Heart left ventricle (tissue), 16 donors: ENCODE measurements at regions of chr4 and their contacts with region 1.

Region 1: DNA sequence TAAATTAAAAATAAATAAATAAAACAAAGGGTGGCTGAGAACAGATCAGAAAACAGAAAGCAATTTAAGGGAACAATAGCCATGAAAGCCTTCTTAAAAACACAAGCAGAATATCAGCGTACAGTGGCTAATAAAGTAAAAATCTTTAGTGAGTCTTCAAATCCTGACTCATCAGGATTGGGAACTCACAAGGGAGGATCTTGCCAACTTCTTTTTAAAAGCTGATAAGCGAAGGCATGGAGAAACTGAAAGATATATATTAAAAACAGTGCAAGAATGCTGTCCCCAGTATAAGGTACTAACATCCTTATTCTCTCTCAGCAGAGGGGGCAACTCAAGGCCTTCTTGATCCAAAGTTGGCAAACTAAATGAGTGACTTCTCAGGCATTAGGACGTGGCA is 180.1 kb downstream of the DHX15 start:
- DNase-seq: no peak
- ATAC-seq: no peak
- H3K4me3 ChIP-seq: no peak overlapping the region
- H3K27ac ChIP-seq: no peak overlapping the region
- H3K4me1 ChIP-seq: no peaks in the 10 kb centered on the region
- H3K27me3 ChIP-seq: no peaks in the 10 kb centered on the region
- CTCF ChIP-seq: no peak
- POLR2A ChIP-seq: no peak

Region 2: DNA sequence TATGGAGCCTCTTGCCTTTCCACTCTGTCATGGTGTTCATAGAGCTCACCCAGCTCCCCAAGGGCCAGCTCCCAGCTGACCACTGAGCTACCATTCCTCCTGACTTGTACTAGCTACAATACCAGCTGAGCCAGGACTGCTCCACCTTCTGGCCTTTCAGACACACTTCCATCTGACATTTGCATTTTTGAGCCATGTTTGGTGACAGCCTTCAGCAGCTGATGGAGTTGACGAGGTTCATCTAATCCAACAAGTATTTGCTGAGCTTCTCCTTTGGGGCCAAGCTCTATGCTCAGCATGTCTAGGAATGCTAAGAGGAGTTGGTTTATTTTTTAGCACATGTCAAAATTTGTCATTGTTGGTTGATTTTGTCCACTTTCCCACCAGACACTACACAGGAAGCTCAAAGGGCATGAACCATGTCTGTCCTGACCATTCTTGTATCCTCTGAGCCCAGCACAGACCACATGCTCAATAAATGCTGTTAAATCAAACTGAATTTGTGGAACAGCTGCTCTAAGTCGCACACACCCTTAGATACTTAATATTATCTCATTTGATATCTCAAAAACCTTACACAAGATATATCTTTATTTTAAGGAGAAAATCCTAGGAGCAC is 371.8 kb before region 1 on chr4:
- intact Hi-C with region 1: loop called in 1 of 10 experiments (anchors 10 kb)
- DNase-seq: peak in 2 of 5 donors; percentile 38 to 49
- ATAC-seq: peak in 3 of 4 donors; percentile 48 to 79 (median 76)
- H3K4me3 ChIP-seq: no peak overlapping the region
- H3K27ac ChIP-seq: no peak overlapping the region
- H3K4me1 ChIP-seq: peaks cover 0 to 2% (median 0%) of the 10 kb centered on the region in 12 donors
- H3K27me3 ChIP-seq: no peaks in the 10 kb centered on the region
- CTCF ChIP-seq: peak in 9 of 12 donors; percentile 9 to 46 (median 30)
- POLR2A ChIP-seq: no peak

Region 3: DNA sequence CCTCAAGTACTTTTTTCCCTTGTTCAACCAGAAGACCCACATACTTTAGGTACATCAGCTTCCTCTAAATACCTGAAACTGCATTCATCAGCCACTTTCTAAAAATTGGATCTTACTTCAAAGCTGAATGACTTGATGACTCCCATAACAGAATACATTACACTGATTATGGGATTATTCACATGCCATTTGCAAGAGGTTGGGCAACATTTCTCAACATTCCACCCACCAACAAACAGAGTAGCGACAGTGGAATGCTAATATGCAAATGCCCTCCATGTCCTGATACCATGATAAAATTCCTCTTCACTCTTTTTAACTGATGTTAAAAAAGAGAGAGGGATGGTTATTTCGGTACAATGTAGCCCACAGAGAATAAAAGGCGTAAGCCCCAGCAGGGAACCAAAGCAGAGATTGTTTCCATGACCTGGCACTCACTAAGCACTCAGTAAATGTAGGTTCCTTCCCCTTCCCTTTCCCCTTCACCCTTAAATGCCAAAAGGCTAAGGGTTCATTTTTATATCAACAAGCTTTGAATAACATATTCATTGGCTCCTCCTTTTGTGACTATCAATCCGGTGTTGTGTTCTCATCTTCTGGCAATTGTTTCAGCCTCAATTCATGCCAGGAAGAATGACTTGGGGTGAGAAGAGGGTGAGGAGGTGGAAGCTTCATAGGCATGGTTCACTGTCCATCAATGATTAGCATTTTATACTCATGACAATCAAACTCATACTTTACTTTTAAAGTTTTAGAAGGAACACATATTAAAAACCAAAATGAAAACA is 137.1 kb before region 1 on chr4:
- intact Hi-C with region 1: loop called in 1 of 10 experiments (anchors 10 kb)
- DNase-seq: no peak
- ATAC-seq: no peak
- H3K4me3 ChIP-seq: no peak overlapping the region
- H3K27ac ChIP-seq: no peak overlapping the region
- H3K4me1 ChIP-seq: no peaks in the 10 kb centered on the region
- H3K27me3 ChIP-seq: no peaks in the 10 kb centered on the region
- CTCF ChIP-seq: no peak
- POLR2A ChIP-seq: no peak